Endothelial cell of umbilical vein (primary cell): ENCODE measurements at regions of chr2 and their contacts with region 1.

Region 1: GRCh38 chr2:172813314-172813888 is 77.8 kb downstream of the RAPGEF4 start:
- DNase-seq: peak; percentile 68
- H3K4me3 ChIP-seq: no peak overlapping the region
- H3K27ac ChIP-seq: no peak overlapping the region
- H3K4me1 ChIP-seq: no peaks in the 10 kb centered on the region
- H3K27me3 ChIP-seq: peaks cover 0 to 2% of the 10 kb centered on the region in 2 experiments
- CTCF ChIP-seq: peak in 1 of 2 donors; percentile 37
- POLR2A ChIP-seq: no peak

Region 2: DNA sequence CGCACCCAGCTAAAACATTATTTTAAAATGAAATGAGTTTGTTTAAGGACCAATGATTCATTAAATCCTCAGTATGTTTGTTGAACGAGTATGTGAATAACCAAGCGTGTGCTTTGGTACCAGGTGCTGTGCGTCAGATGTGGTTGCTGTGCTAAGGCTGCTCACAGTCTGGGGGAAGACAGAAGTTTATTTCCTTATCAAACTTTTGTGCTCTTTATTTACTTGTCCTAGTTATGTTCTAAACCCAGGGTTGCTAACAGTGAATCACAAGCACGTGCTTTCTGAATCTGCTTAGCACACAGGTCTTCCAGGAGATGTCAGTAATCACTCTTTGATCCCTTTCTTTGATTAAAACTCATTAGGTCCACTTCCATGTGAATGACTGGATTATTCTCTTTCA is 40.8 kb before region 1 on chr2:
- CTCF ChIA-PET with region 1: no interaction called
- POLR2A ChIA-PET with region 1: no interaction called
- dilution Hi-C with region 1: no loop called
- intact Hi-C with region 1: no loop called
- DNase-seq: no peak
- H3K4me3 ChIP-seq: no peak overlapping the region
- H3K27ac ChIP-seq: no peak overlapping the region
- H3K4me1 ChIP-seq: no peaks in the 10 kb centered on the region
- H3K27me3 ChIP-seq: peaks cover 0 to 2% of the 10 kb centered on the region in 2 experiments
- CTCF ChIP-seq: no peak
- POLR2A ChIP-seq: no peak

Region 3: DNA sequence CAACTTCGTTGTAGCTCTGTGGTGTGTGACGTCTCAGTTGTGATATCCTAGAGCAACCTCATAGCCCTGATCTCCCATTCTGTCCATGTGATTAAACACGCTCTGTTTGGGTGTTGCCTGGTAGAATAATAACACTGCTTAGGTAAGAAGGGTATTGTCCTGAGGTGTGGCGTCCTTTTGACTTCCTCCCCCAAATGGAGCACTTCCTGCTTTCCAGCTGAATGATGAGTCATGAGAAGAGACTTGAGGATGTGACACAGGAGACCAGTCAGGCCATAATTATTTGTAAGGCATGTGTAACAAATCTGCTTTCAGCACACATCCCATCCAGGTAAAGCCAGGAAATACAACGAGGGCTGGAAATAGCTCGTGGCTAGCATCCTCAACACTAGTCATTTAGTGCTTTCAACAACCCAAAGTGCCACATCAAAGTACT is 23.0 kb after region 1 on chr2:
- CTCF ChIA-PET with region 1: interaction called, 24 read pairs
- POLR2A ChIA-PET with region 1: no interaction called
- dilution Hi-C with region 1: no loop called
- intact Hi-C with region 1: no loop called
- DNase-seq: peak; percentile 88
- H3K4me3 ChIP-seq: no peak overlapping the region
- H3K27ac ChIP-seq: peak overlapping the region; percentile 67
- H3K4me1 ChIP-seq: peaks cover 28% of the 10 kb centered on the region
- H3K27me3 ChIP-seq: no peaks in the 10 kb centered on the region
- CTCF ChIP-seq: no peak
- POLR2A ChIP-seq: no peak

Region 4: GRCh38 chr2:172864182-172864581 is 50.8 kb after region 1 on chr2:
- CTCF ChIA-PET with region 1: interaction called, 45 read pairs
- POLR2A ChIA-PET with region 1: no interaction called
- dilution Hi-C with region 1: no loop called
- intact Hi-C with region 1: loop called (anchors 1 kb)
- DNase-seq: peak; percentile 29
- H3K4me3 ChIP-seq: no peak overlapping the region
- H3K27ac ChIP-seq: no peak overlapping the region
- H3K4me1 ChIP-seq: peaks cover 20% of the 10 kb centered on the region
- H3K27me3 ChIP-seq: no peaks in the 10 kb centered on the region
- CTCF ChIP-seq: peak; percentile 66 to 68
- POLR2A ChIP-seq: no peak

Region 5: DNA sequence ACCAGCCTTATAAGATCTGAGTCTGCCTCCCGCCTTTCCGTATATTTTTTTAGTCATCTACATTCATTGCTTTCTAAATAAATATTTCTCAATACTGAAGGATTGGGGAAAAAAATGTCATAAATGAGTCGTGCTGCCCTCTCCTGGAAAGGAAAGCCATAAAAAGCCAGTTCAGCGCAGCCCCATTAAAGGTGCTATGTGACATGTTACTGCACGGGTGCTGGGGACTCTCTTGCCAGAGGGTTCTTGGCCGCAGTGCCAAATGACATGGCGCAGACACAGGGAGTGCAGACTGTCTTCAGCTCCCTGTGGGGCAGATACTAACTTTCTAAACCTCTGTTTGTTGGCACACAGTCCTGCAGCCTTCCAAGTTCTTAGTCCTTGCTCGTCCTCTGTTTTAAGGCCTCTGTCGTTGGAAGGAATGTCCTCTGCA is 208.6 kb after region 1 on chr2:
- CTCF ChIA-PET with region 1: interaction called, 41 read pairs
- POLR2A ChIA-PET with region 1: no interaction called
- dilution Hi-C with region 1: no loop called
- intact Hi-C with region 1: no loop called
- DNase-seq: peak; percentile 18
- H3K4me3 ChIP-seq: no peak overlapping the region
- H3K27ac ChIP-seq: no peak overlapping the region
- H3K4me1 ChIP-seq: no peaks in the 10 kb centered on the region
- H3K27me3 ChIP-seq: peaks cover 0 to 2% of the 10 kb centered on the region in 2 experiments
- CTCF ChIP-seq: peak; percentile 8 to 23
- POLR2A ChIP-seq: no peak